ENCODE measurements at regions of chr1 and their contacts with region 1.

Region 1: GRCh38 chr1:11641776-11642305 is 12.4 kb downstream of the FBXO2 start:
- DNase-seq: no peak
- H3K4me3 ChIP-seq: no peak overlapping the region
- H3K27ac ChIP-seq: no peak overlapping the region
- H3K4me1 ChIP-seq: no peaks in the 10 kb centered on the region
- H3K27me3 ChIP-seq: no peaks in the 10 kb centered on the region
- CTCF ChIP-seq: no peak

Region 2: DNA sequence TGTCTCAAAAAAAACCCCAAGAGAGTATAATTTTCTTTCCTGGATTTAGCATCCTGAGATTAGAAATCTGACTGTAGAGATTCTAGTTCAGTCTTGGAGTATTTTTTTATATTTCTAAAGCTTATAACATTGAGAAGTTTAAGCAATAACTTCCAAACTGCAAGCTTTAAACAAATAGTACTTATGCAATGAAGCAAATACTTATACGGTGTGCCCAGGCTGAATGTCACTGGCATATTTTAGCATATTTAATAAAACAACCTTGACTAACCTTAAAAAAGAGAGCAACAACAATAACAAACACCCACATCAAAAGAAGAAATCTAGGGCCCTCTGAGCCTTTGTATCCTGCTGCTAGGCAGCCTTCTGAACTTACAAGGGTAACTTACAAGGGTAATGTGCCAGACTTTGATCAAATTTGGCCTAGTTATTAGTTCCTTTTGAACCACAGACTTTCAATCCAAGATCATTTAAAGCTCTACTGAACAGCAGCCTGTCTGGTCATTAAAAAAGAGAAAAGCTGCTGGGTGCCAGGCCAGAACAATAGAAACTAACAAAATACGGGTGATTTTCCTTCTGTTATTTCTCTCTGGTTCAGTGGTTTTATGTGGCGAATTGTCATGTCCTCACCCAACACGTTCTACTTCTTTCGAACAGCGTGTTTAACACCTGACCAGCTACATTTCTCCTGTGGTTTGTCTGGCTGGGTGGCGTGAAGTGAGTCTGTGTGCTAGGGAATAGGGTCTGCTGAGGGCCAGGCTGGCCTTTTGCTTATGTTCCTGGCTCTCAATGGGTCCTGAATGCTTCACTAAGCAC is 395.7 kb before region 1 on chr1:
- intact Hi-C with region 1: loop called (anchors 2 kb)
- DNase-seq: no peak
- H3K4me3 ChIP-seq: no peak overlapping the region
- H3K27ac ChIP-seq: no peak overlapping the region
- H3K4me1 ChIP-seq: no peaks in the 10 kb centered on the region
- H3K27me3 ChIP-seq: no peaks in the 10 kb centered on the region
- CTCF ChIP-seq: no peak

Region 3: DNA sequence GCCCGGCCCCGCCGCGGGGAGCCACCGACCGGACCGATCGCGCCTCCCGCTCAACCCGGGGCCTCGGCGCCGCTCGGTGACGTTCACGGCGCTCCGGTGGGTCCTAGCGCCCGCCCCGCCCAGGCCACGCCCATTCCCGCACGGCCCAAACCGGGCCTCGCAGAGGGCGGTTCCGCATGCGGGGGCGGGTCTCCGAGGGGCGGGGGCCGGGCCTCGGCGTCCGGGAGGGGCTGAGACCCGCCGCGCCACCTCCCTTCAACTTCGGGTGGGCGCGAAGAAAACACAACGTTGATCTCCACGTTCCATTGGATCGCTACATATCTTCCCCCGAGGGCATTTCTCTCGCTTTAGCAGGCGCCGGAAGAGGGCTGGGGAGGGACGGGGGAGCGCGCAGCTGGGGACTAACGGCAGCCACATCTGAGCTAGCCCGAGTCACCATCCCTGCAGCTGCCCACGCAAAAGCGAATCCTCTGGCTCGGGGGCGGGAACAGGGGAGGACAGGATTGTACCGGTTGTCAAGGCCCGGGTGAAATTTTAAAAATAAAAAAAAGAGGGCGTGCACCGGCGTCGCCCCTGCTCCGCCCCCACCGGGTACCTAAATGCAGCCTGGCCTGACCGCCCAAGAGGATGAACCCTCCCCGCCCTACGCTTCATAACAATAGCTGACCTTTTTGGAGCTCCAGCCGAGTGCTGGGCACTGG is 39.4 kb after region 1 on chr1 and contains the start of gene MAD2L2:
- intact Hi-C with region 1: no loop called
- DNase-seq: peak; percentile 37 to 91
- H3K4me3 ChIP-seq: peak within 1 kb of the TSS; percentile 81 to 90
- H3K27ac ChIP-seq: peak within 1 kb of the TSS; percentile 68 to 89
- H3K4me1 ChIP-seq: peaks cover 0 to 5% of the 10 kb centered on the region in 2 donors
- H3K27me3 ChIP-seq: no peaks in the 10 kb centered on the region
- CTCF ChIP-seq: peak in 1 of 3 experiments; percentile 1
- total RNA-seq, gene MAD2L2: 18.3 TPM

Region 4: DNA sequence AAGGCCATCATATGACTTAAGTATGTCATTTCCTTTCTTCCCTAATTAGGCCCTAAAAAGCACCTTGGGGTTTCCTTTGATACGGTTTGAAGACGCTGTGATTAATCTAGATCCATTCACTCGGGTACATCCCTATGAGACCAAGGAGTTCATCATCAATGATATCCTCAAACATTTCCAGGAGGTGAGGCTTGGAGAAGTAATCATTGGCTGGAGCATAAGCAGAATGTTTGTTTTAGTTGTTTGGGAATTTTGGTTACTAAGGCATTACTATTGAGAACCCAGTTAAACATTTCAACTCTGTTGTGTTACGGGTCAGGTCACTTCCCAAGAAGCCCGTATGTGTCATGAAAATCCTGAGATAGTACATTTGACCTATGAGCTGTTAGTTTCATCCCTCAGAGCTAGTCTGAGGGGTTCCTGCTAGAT is 773.2 kb after region 1 on chr1:
- intact Hi-C with region 1: no loop called
- DNase-seq: no peak
- H3K4me3 ChIP-seq: no peak overlapping the region
- H3K27ac ChIP-seq: no peak overlapping the region
- H3K4me1 ChIP-seq: peaks cover 0 to 2% of the 10 kb centered on the region in 2 donors
- H3K27me3 ChIP-seq: no peaks in the 10 kb centered on the region
- CTCF ChIP-seq: no peak

Measured in ascending aorta (tissue), 2 donors.